Astrocyte of the cerebellum (primary cell): ENCODE measurements at regions of chr10 and their contacts with region 1.

Region 1: DNA sequence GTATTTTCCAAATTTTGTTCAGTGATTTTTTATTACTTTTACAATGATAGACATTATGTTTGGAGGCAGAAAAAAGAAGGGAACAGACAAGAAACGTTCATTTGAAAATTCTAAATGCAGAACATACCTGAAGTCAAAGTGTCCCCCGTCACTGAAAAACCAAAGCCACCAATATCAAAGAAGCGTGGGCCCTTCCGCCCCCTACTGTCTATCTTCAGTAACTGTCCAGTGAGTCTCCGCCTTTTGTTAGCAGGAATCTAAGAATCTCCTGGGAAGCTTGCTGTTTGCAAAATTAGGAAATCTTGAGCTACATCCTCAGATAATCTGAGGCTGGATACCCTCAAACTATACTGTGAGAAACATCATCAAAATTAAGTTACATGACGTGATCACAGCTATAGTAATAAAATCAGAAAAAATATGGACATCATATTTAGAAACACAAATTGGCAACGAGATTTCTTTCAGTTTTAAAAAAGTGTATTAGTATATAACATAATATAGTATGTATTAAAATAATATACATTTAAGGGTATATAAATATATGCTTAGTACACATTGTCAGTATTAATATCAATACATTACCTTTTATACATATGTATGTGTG is 169.3 kb upstream of the AKR1E2 start:
- DNase-seq: peak; percentile 65
- H3K4me3 ChIP-seq: no peak overlapping the region
- CTCF ChIP-seq: peak; percentile 89

Region 2: GRCh38 chr10:4623757-4624420 is 32.8 kb before region 1 on chr10:
- in situ Hi-C with region 1: loop called (anchors 5 kb)
- DNase-seq: no peak
- H3K4me3 ChIP-seq: no peak overlapping the region
- CTCF ChIP-seq: no peak

Region 3: GRCh38 chr10:4849555-4850242 is 193.0 kb after region 1 on chr10:
- in situ Hi-C with region 1: no loop called
- DNase-seq: peak; percentile 94
- H3K4me3 ChIP-seq: no peak overlapping the region
- CTCF ChIP-seq: peak; percentile 98